Cardiac septum (tissue), 1 donor: ENCODE measurements at regions of chr1 and their contacts with region 1.

Region 1: GRCh38 chr1:44213222-44214112 is at the start of gene DMAP1:
- DNase-seq: peak; percentile 93
- total RNA-seq, gene DMAP1: 27.7 TPM

Region 2: GRCh38 chr1:44318097-44319088 is 104.9 kb after region 1 on chr1:
- intact Hi-C with region 1: loop called (anchors 2 kb)
- DNase-seq: no peak

Region 3: DNA sequence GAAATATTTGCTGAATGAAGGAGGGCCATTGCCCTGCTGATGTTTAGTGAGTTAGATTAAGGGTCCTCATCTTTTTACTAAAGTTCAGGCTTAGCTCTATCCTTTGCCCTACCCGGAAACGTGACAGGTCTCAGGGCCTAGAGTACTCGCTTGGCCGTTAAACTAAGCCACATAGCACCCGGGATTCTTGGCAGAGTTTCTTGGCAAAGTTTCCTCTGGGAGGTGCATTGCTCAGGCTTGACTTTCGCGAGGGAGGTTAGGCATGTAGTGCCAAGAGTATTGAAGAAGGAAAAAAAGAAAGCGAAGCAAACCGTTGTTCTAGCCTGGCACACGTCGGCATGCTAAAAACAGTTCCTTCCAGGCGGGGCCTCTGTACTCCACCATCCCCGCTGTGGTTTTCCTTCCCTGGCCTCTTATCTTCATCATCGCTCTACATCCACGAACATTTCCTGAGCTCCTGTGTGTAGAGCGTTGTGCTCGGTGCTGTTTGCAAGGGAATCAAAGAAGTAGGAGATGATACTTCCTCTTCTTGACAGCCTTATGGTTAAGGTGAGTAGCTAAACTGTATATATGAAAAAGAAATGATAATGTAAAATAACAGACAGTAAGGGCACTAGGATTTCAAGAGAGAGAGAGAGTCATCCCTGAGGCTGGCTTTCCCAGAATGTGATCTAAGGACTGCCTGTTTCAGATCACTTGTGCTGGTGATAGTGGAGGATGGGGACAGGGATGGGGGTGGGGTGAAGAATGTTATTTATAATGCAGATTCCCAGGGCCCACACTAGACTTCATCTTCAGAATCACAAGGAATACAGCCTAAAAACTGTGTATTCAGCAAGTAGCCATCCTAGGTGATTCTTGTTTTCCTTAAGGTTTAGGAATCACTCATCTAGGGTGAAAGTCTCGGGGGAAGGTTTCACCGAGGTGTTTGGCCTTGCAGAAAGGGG is 210.4 kb after region 1 on chr1:
- intact Hi-C with region 1: loop called (anchors 10 kb)
- DNase-seq: no peak

Region 4: GRCh38 chr1:44472620-44473525 is 259.4 kb after region 1 on chr1:
- intact Hi-C with region 1: no loop called
- DNase-seq: no peak

Region 5: GRCh38 chr1:44594871-44595746 is 381.6 kb after region 1 on chr1:
- intact Hi-C with region 1: loop called (anchors 2 kb)
- DNase-seq: peak; percentile 93

Region 6: GRCh38 chr1:44652445-44653106 is 439.1 kb after region 1 on chr1:
- intact Hi-C with region 1: loop called (anchors 5 kb)
- DNase-seq: peak; percentile 89